ENCODE measurements at regions of chr15 and their contacts with region 1.

Region 1: GRCh38 chr15:50686468-50687301 is at the start of gene TRPM7:
- DNase-seq: peak; percentile 93
- H3K4me3 Mint-ChIP-seq: peak within 1 kb of the TSS; percentile 99
- H3K27ac Mint-ChIP-seq: peak within 1 kb of the TSS; percentile 100
- H3K4me1 Mint-ChIP-seq: peaks cover 51% of the 10 kb centered on the region
- H3K27me3 Mint-ChIP-seq: no peaks in the 10 kb centered on the region
- total RNA-seq, gene TRPM7: 37.4 to 44.8 TPM

Region 2: DNA sequence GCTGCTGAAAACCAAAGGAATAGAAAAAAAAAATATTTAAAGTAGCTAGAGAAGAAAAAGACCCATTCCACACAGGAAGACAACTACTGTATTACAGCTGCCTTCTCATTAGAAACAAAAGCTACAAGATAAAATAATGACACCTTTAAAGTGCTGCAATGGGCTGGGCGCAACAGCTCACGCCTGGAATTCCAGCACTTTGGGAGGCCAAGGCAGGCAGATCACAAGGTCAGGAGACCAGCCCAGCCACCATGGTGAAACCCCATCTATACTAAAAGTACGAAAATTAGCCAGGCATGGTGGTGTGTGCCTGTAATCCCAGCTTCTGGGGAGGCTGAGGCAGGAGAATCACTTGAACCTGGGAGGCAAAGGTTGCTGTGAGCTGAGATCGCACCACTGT is 31.1 kb before region 1 on chr15:
- CTCF ChIA-PET with region 1: no interaction called
- POLR2A ChIA-PET with region 1: no interaction called
- intact Hi-C with region 1: loop called (anchors 2 kb)
- DNase-seq: no peak
- H3K4me3 Mint-ChIP-seq: no peak overlapping the region
- H3K27ac Mint-ChIP-seq: no peak overlapping the region
- H3K4me1 Mint-ChIP-seq: peaks cover 22% of the 10 kb centered on the region
- H3K27me3 Mint-ChIP-seq: no peaks in the 10 kb centered on the region

Region 3: DNA sequence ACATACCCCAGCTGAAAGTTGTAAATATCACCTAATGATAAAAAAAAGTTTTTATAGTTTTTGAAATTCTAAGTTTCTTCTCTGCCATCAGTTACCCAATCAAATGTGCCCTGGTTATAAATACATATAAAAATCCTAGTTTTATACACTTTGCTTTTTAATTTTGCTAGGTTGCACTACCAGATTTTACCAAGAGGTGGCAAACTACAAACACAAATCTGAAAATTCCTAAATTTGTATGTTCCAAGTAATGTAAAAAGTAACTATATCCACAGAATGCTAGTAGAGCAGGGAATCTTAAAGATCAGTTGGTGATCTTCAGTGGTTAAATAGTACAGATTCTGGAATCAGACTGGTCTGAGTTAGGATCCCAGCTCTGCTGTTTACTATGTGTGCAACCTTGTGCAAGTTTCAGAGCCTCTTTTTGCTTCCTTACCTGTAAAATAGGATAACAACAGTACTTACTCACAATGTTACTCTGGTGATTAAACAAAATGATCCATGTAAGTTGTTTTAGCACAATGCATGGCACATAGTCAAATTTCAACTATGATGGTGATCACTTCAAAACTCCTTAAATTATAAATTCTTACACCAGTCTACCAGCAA is 11.0 kb before region 1 on chr15:
- CTCF ChIA-PET with region 1: interaction called, 15 read pairs
- POLR2A ChIA-PET with region 1: interaction called, 3 read pairs
- intact Hi-C with region 1: no loop called
- DNase-seq: no peak
- H3K4me3 Mint-ChIP-seq: no peak overlapping the region
- H3K27ac Mint-ChIP-seq: peak overlapping the region; percentile 33
- H3K4me1 Mint-ChIP-seq: peaks cover 40% of the 10 kb centered on the region
- H3K27me3 Mint-ChIP-seq: no peaks in the 10 kb centered on the region

Region 4: DNA sequence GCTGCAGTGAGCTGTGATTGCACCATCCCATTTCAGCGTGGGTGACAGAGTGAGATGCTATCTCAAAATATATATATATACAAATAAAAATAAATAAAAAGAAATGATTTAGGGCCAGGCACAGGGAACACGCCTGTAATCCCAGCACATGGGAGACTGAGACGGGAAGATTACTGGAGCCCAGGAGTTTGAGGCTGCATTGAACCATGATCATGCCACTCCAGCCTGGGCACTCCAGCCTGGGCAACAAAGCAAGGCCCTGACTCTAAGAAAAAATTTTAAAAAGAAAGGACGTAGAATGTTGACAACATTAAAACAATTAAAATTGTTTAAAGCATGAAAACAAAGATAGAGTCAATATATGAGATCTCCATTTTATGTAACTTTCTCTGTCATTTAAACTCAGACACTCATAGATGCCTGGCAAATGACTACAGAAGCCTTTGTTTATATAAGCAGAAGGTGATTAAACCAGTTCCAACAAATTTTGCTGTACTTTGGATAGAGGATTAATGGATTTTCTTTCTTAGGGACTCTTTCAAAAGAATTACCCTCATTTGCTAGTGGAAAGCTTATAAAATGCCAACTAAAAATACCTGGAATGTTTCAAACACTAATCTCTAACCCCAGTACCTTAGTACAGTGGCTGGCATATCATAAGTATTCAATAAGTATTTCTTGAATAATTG is 10.6 kb after region 1 on chr15:
- CTCF ChIA-PET with region 1: no interaction called
- POLR2A ChIA-PET with region 1: no interaction called
- intact Hi-C with region 1: no loop called
- DNase-seq: no peak
- H3K4me3 Mint-ChIP-seq: no peak overlapping the region
- H3K27ac Mint-ChIP-seq: no peak overlapping the region
- H3K4me1 Mint-ChIP-seq: peaks cover 2% of the 10 kb centered on the region
- H3K27me3 Mint-ChIP-seq: no peaks in the 10 kb centered on the region

Region 5: DNA sequence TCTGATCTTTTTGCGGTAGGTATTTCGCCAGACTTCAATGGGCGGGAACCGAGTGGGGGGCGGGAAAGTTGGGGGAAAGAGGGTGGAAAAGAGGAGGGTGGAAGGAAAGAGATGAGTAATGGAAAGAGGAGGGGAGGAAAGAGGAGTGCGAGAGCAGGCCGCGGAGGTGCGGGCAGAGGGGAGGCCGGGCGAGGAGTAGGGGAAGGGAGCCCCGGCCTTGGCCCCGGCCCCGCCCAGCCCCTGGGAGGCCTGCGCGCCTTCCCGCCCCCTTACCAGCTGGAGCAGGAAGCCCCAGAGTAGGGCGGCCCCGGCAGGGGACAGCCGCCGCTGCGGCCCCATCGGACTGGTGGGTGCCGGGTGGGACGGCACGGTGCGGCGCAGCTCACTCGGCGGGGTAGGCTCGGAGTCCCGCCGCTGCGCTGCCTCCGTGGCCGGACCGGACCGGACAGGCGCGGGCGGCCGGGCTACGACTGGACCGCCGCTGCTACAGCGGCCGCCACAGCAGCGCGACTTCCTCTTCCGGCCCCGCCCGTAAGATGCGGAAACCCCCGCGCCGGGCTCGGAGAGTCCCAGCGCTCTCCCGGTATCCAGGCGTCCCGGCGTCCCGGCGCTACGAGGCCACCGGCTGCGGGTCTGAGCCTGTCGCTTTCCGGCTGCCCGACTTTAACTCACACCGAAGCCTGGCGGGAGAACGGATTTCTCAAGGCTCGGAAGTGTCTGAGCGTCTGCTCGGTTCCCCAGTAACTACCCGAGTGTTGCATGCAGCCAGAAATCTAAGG is 78.7 kb after region 1 on chr15 and contains the start of gene SPPL2A:
- CTCF ChIA-PET with region 1: no interaction called
- POLR2A ChIA-PET with region 1: interaction called, 8 read pairs
- intact Hi-C with region 1: loop called (anchors 1 kb)
- DNase-seq: peak; percentile 94
- H3K4me3 Mint-ChIP-seq: peak within 1 kb of the TSS; percentile 92
- H3K27ac Mint-ChIP-seq: peak within 1 kb of the TSS; percentile 93
- H3K4me1 Mint-ChIP-seq: peaks cover 56% of the 10 kb centered on the region
- H3K27me3 Mint-ChIP-seq: no peaks in the 10 kb centered on the region
- total RNA-seq, gene SPPL2A: 79.9 to 82.1 TPM

Measured in activated CD4-positive, alpha-beta memory T cell treated with anti-CD3 and anti-CD28 coated beads for 36 hours (primary cell).